Activated CD4-positive, alpha-beta T cell treated with anti-CD3 and anti-CD28 coated beads for 36 hours (primary cell): ENCODE measurements at regions of chrX and their contacts with region 1.

Region 1: DNA sequence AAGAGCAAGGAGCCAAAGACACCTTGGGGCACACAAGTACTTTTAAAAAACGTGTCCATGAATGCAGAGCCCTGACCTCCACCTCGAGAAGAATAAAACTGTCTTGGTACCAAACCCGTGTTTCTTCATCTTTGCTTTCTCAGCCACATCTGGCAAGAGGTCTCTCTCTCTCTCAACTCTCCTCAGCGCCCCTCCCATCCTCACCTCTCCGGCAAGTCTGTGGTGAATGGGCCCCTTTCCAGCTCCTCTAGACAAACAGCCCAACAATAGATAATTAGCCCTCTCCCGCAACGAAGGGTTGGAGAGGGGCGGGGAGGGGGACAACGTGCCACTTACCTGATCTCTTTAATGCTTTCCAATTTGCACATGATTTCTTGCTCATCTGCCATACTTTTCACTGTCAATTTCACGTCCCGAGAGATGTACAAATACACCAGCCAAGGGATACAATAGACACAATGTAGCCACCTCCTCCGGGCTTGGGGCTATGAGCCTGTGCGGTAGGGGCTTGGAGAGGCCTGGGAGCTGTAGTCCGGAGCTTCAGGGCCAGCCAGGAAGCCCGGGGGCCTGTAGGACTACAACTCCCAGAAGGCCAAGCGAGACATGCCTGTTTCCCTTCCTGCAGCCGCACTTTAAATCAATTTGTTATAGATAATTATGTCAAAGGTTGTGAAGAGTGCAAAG is at the start of gene ZC4H2:
- DNase-seq: peak; percentile 81
- ATAC-seq: peak; percentile 99
- H3K4me3 Mint-ChIP-seq: peak within 1 kb of the TSS; percentile 94
- H3K27ac Mint-ChIP-seq: peak within 1 kb of the TSS; percentile 81
- H3K4me1 Mint-ChIP-seq: peaks cover 18% of the 10 kb centered on the region
- H3K27me3 Mint-ChIP-seq: no peaks in the 10 kb centered on the region
- total RNA-seq, gene ZC4H2: 14.7 to 18.8 TPM

Region 2: DNA sequence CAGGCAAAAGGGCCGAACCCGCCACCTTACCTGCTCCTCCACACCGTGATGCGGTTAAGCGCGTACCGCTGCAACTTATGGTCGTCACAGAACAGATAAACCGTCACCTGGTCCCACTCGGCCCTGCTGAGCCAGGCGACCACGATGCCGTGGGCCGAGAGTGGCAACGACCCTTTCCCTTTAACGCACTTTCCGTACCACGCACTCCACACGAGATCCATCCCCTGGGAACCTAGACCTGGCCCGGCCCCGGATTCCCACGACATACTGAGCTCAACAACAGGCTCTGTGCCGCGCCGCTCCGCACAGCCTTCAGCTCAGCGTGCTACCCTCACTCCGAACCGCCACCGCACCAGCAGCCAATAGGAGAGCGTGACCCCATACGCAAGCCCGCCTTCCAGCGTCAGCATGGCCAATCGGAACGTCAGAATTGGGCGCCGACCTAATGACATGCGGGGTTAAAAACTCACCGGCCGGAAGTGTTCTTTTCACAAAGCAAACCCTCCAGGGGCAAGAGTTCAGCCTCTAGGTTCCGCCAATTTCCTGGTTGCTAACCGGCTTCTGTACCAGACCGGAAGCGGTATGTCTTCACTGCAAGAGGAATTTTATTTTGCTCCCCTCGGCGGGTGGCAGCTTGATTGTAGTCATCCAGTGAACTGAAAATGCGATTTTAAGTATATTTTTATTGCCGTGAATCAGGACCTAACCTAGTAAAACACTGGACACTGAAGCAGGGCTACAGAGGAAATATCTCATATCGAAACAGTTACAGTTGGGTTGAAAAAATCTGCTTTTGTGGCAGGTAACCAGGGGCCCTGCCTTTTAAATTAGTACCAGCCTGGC is 558.5 kb after region 1 on chrX and contains the start of gene LAS1L:
- CTCF ChIA-PET with region 1: no interaction called
- POLR2A ChIA-PET with region 1: no interaction called
- intact Hi-C with region 1: loop called in 1 of 2 experiments (anchors 1 kb)
- DNase-seq: peak; percentile 93
- ATAC-seq: peak; percentile 100
- H3K4me3 Mint-ChIP-seq: peak within 1 kb of the TSS; percentile 99
- H3K27ac Mint-ChIP-seq: peak within 1 kb of the TSS; percentile 96
- H3K4me1 Mint-ChIP-seq: peaks cover 19% of the 10 kb centered on the region
- H3K27me3 Mint-ChIP-seq: no peaks in the 10 kb centered on the region
- total RNA-seq, gene LAS1L: 56.4 to 64.0 TPM

Region 3: GRCh38 chrX:65828599-65828998 is 852.5 kb after region 1 on chrX:
- CTCF ChIA-PET with region 1: no interaction called
- POLR2A ChIA-PET with region 1: no interaction called
- intact Hi-C with region 1: no loop called
- DNase-seq: no peak
- ATAC-seq: no peak
- H3K4me3 Mint-ChIP-seq: no peak overlapping the region
- H3K27ac Mint-ChIP-seq: no peak overlapping the region
- H3K4me1 Mint-ChIP-seq: no peaks in the 10 kb centered on the region
- H3K27me3 Mint-ChIP-seq: no peaks in the 10 kb centered on the region